Naive thymus-derived CD4-positive, alpha-beta T cell (primary cell): ENCODE measurements at regions of chr14 and their contacts with region 1.

Region 1: GRCh38 chr14:52233693-52234092 is 33.8 kb upstream of the PTGDR start:
- DNase-seq: no peak
- ATAC-seq: no peak
- H3K4me3 ChIP-seq: no peak overlapping the region
- H3K4me3 Mint-ChIP-seq: no peak overlapping the region
- H3K27ac ChIP-seq: no peak overlapping the region
- H3K27ac Mint-ChIP-seq: no peak overlapping the region
- H3K4me1 ChIP-seq: no peaks in the 10 kb centered on the region
- H3K4me1 Mint-ChIP-seq: peaks cover 0 to 22% (median 4%) of the 10 kb centered on the region in 7 donors
- H3K27me3 ChIP-seq: no peaks in the 10 kb centered on the region
- H3K27me3 Mint-ChIP-seq: peaks cover 0 to 13% (median 0%) of the 10 kb centered on the region in 5 donors

Region 2: DNA sequence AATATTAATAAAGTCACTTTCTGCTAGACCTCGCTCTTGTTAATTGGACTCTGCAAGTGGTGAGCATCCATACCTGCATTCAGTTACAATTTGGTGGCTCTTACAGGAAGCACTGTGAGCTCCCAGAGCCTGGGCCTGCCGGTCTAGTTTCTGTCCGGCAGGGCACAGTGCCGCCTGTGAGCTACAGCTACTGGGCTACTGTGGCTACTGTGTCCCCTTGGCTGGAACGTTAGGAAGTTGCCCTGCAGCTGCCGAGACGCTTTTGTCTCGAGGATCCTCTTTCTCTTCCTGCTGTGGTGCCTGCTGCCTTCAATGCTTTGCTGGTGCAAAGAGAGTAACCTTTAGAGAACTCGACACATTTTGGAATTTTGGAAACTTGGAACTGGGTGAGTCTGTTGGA is 10.8 kb before region 1 on chr14:
- CTCF ChIA-PET with region 1: no interaction called
- POLR2A ChIA-PET with region 1: no interaction called
- intact Hi-C with region 1: loop called in 1 of 2 experiments (anchors 1 kb)
- DNase-seq: no peak
- ATAC-seq: no peak
- H3K4me3 ChIP-seq: no peak overlapping the region
- H3K4me3 Mint-ChIP-seq: peak overlapping the region in 2 of 10 donors; percentile 10 to 28
- H3K27ac ChIP-seq: no peak overlapping the region
- H3K27ac Mint-ChIP-seq: no peak overlapping the region
- H3K4me1 ChIP-seq: peaks cover 7 to 8% of the 10 kb centered on the region in 2 donors
- H3K4me1 Mint-ChIP-seq: peaks cover 0 to 19% (median 16%) of the 10 kb centered on the region in 7 donors
- H3K27me3 ChIP-seq: no peaks in the 10 kb centered on the region
- H3K27me3 Mint-ChIP-seq: peaks cover 0 to 5% (median 0%) of the 10 kb centered on the region in 5 donors